Dendritic cell treated with granulocyte-macrophage colony-stimulating factor and Interleukin-4, amounts not matched to agents 40 ng/mL and 50 ng/mL, for 4 days (primary cell): ENCODE measurements at regions of chr6 and their contacts with region 1.

Region 1: GRCh38 chr6:166325383-166326042 is 16.8 kb downstream of the SFT2D1 start:
- H3K4me3 Mint-ChIP-seq: no peak overlapping the region
- H3K27ac Mint-ChIP-seq: no peak overlapping the region
- H3K4me1 Mint-ChIP-seq: peaks cover 9% of the 10 kb centered on the region
- H3K27me3 Mint-ChIP-seq: no peaks in the 10 kb centered on the region

Region 2: GRCh38 chr6:166365221-166365620 is 39.7 kb after region 1 on chr6:
- intact Hi-C with region 1: loop called (anchors 5 kb)
- H3K4me3 Mint-ChIP-seq: no peak overlapping the region
- H3K27ac Mint-ChIP-seq: no peak overlapping the region
- H3K4me1 Mint-ChIP-seq: peaks cover 15% of the 10 kb centered on the region
- H3K27me3 Mint-ChIP-seq: no peaks in the 10 kb centered on the region